Panc1 (cell line): ENCODE measurements at regions of chr10 and their contacts with region 1.

Region 1: GRCh38 chr10:121880895-121881294 is 46.9 kb downstream of the ATE1 start:
- DNase-seq: no peak
- ATAC-seq: no peak
- H3K4me3 ChIP-seq: no peak overlapping the region
- H3K27ac ChIP-seq: no peak overlapping the region
- H3K4me1 ChIP-seq: no peaks in the 10 kb centered on the region
- H3K27me3 ChIP-seq: no peaks in the 10 kb centered on the region
- CTCF ChIP-seq: no peak

Region 2: DNA sequence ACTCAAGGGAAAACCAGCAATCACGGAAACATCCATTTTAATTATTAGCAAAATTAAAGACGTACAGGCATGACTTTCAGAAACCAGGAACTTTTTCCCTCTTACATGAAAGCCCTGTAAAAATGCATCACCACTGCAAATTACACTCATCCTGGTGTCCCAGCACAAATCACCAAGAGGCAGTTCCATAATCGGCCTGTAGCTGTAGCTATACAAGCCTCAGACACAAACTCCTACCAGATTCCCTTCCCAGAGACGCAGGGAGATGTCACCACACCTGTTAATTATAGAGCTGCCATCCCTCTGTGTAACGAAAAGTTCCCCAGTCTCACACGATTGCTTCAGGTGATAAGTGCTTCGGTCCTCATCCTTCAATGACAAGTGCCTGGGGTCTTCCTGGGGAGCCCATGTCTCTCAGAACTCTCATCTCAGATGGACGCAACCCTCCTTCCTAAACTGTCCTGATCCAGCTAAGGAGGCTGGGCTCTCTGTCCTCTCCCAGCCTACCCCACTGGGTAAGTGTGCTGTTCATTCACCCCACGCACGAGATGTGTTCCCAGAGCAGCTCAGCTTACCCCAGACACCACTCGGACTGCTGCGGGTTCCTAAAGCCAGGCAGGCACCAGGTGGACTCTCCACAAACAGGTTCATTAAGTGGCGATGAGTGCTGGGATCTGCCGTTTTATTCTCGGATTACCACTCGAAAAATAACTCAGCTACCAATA is 288.6 kb before region 1 on chr10:
- CTCF ChIA-PET with region 1: no interaction called
- POLR2A ChIA-PET with region 1: no interaction called
- in situ Hi-C with region 1: no loop called
- intact Hi-C with region 1: no loop called
- DNase-seq: no peak
- ATAC-seq: no peak
- H3K4me3 ChIP-seq: no peak overlapping the region
- H3K27ac ChIP-seq: no peak overlapping the region
- H3K4me1 ChIP-seq: peaks cover 2% of the 10 kb centered on the region; the same call in 1 of the 2 replicates
- H3K27me3 ChIP-seq: no peaks in the 10 kb centered on the region; the same call in 1 of the 2 replicates
- CTCF ChIP-seq: peak; percentile 34; the same call in 1 of the 2 replicates

Region 3: GRCh38 chr10:121828045-121828444 is 52.9 kb before region 1 on chr10:
- CTCF ChIA-PET with region 1: no interaction called
- POLR2A ChIA-PET with region 1: no interaction called
- in situ Hi-C with region 1: no loop called
- intact Hi-C with region 1: loop called (anchors 5 kb)
- DNase-seq: no peak
- ATAC-seq: no peak
- H3K4me3 ChIP-seq: no peak overlapping the region
- H3K27ac ChIP-seq: no peak overlapping the region
- H3K4me1 ChIP-seq: no peaks in the 10 kb centered on the region
- H3K27me3 ChIP-seq: no peaks in the 10 kb centered on the region
- CTCF ChIP-seq: no peak